IMR-90 (cell line): ENCODE measurements at regions of chr7 and their contacts with region 1.

Region 1: GRCh38 chr7:147432079-147432478 is 1158.5 kb upstream of the C7orf33 start:
- DNase-seq: peak; percentile 48
- ATAC-seq: peak; percentile 80
- H3K4me3 ChIP-seq: no peak overlapping the region
- H3K27ac ChIP-seq: no peak overlapping the region
- H3K4me1 ChIP-seq: no peaks in the 10 kb centered on the region
- H3K27me3 ChIP-seq: no peaks in the 10 kb centered on the region
- CTCF ChIP-seq: peak; percentile 45
- POLR2A ChIP-seq: no peak
- RAD21 ChIP-seq: peak; percentile 73

Region 2: DNA sequence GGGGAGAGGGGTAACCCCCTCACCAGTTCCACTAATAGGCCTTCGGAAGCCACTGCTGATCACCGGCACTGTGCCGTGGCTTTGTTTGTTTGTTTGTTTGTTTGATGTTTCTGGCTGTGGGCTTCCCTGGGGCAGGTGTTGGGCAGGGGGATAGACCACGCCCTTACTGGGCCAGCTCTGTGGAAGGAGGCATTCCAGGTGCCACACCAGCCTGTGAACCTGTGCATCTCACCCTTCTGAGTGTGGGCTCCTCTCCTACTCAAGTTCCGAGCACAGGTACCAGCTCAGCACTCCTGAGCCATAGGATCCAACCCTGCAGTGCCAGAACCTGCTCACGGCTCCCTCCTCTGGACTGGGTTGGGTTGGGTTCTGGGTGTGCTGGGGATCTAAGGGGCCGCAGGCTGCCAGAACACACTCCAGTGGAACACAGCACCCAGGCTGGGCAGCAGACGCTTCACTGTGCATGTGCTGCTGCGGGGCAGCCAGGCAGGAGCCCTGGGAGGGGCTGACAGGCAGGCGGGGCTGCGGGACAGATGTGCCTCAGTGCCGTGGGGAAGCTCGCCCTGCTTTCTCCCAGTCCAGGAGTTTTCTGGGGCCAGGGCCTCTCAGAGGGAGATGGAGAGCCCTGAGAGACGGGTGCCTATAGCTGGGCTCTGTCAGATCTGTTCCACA is 261.6 kb before region 1 on chr7:
- CTCF ChIA-PET with region 1: no interaction called
- POLR2A ChIA-PET with region 1: no interaction called
- dilution Hi-C with region 1: no loop called
- in situ Hi-C with region 1: no loop called
- intact Hi-C with region 1: no loop called
- DNase-seq: no peak
- ATAC-seq: no peak
- H3K4me3 ChIP-seq: no peak overlapping the region
- H3K27ac ChIP-seq: no peak overlapping the region
- H3K4me1 ChIP-seq: no peaks in the 10 kb centered on the region
- H3K27me3 ChIP-seq: no peaks in the 10 kb centered on the region
- CTCF ChIP-seq: no peak
- POLR2A ChIP-seq: no peak
- RAD21 ChIP-seq: no peak

Region 3: GRCh38 chr7:148084138-148084537 is 652.1 kb after region 1 on chr7:
- CTCF ChIA-PET with region 1: no interaction called
- POLR2A ChIA-PET with region 1: no interaction called
- dilution Hi-C with region 1: no loop called
- in situ Hi-C with region 1: no loop called
- intact Hi-C with region 1: loop called (anchors 2 kb)
- DNase-seq: peak; percentile 19
- ATAC-seq: peak; percentile 63
- H3K4me3 ChIP-seq: no peak overlapping the region
- H3K27ac ChIP-seq: no peak overlapping the region
- H3K4me1 ChIP-seq: no peaks in the 10 kb centered on the region
- H3K27me3 ChIP-seq: no peaks in the 10 kb centered on the region
- CTCF ChIP-seq: peak; percentile 29; the same call in 1 of the 2 replicates
- POLR2A ChIP-seq: no peak
- RAD21 ChIP-seq: peak; percentile 52

Region 4: DNA sequence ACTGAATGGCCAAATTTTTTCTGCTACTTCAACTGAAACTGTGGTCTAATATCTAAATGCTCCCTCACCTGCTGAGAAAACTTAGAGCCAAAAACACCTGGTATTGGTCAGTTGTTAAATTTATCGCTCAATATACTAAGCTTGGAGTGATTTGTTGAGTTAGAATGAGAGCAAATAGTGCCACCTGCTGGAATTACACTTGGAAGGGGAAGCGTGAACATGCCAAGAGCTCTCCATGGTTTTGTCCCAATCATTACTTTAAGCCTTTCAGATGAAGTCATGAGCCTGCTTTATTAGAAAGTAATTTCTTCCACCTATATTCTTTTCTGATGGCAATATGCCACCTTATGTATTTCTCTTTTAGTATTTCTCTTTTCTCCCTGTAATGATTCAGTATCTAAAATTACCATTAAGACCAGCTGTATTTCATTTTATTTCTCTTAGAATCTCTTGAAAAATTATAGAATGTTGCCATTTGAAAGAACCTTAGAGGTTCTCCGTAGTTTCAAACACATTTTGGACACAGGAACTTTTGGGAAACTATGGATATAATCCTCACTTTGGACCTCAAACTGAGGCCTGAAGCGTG is 710.7 kb after region 1 on chr7:
- CTCF ChIA-PET with region 1: no interaction called
- POLR2A ChIA-PET with region 1: no interaction called
- dilution Hi-C with region 1: no loop called
- in situ Hi-C with region 1: no loop called
- intact Hi-C with region 1: loop called (anchors 2 kb)
- DNase-seq: peak; percentile 21
- ATAC-seq: no peak
- H3K4me3 ChIP-seq: no peak overlapping the region
- H3K27ac ChIP-seq: no peak overlapping the region
- H3K4me1 ChIP-seq: no peaks in the 10 kb centered on the region
- H3K27me3 ChIP-seq: no peaks in the 10 kb centered on the region
- CTCF ChIP-seq: peak; percentile 36; the same call in 1 of the 2 replicates
- POLR2A ChIP-seq: no peak
- RAD21 ChIP-seq: peak; percentile 40; the same call in 1 of the 2 replicates

Region 5: DNA sequence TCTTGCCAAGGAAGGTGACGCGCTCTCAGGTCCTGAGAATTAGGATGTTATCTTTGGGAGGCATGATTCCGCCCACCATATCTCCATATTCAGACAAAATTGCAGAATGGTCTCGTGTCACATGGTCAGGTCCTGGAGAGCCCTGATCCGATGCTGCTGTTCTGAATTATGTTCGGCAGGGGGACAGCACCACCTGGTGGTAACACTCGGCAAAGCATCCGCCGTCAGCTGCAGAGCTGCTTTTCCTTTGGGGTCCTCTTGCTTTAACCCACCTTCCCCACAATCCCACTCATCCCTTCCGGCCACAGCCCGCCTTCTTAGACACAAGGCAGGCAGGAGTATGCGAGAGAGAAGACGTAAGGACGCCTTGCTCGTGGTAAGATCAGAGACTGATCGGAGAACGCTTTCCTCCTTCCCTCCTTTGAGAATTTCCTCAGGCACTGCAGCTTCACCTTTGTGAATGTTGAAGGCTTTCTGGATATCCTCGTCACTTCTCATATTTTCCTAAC is 830.7 kb after region 1 on chr7:
- CTCF ChIA-PET with region 1: no interaction called
- POLR2A ChIA-PET with region 1: no interaction called
- dilution Hi-C with region 1: no loop called
- in situ Hi-C with region 1: loop called (anchors 25 kb)
- intact Hi-C with region 1: no loop called
- DNase-seq: peak; percentile 4
- ATAC-seq: peak; percentile 78
- H3K4me3 ChIP-seq: no peak overlapping the region
- H3K27ac ChIP-seq: no peak overlapping the region
- H3K4me1 ChIP-seq: no peaks in the 10 kb centered on the region
- H3K27me3 ChIP-seq: no peaks in the 10 kb centered on the region
- CTCF ChIP-seq: peak; percentile 58
- POLR2A ChIP-seq: no peak
- RAD21 ChIP-seq: peak; percentile 71